ENCODE measurements at regions of chr2 and their contacts with region 1.

Region 1: GRCh38 chr2:37454851-37455762 is 110.7 kb downstream of the QPCT start:
- DNase-seq: peak; percentile 15
- H3K4me3 ChIP-seq: no peak overlapping the region
- H3K27ac ChIP-seq: no peak overlapping the region
- H3K4me1 ChIP-seq: no peaks in the 10 kb centered on the region
- H3K27me3 ChIP-seq: no peaks in the 10 kb centered on the region
- CTCF ChIP-seq: no peak

Region 2: GRCh38 chr2:37582481-37583220 is 127.5 kb after region 1 on chr2:
- CTCF ChIA-PET with region 1: no interaction called
- POLR2A ChIA-PET with region 1: interaction called, 10 read pairs
- intact Hi-C with region 1: no loop called
- DNase-seq: peak; percentile 59
- H3K4me3 ChIP-seq: no peak overlapping the region
- H3K27ac ChIP-seq: peak overlapping the region; percentile 28
- H3K4me1 ChIP-seq: peaks cover 55% of the 10 kb centered on the region
- H3K27me3 ChIP-seq: no peaks in the 10 kb centered on the region
- CTCF ChIP-seq: no peak

Measured in A673 (cell line).